ENCODE measurements at regions of chr7 and their contacts with region 1.

Region 1: DNA sequence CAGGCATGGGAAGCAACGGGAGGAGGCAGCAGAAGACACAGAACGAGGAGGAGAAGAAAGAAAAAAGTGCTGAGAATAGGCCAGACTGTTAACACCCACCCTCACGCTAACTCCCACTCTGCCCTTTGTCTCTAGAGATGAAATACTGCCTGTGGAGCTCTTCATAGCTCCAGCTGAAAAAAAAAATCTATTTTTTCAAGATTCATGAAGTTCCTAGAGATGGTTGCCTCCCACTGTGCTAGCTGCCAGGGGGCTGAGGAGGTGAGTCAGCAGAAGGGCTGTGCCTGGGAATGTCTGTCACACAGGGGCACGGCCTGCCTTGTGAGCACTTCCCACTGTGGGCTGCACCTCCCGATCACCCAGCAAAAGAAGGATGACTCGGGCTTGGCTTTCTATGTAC is 144.5 kb downstream of the RNF216 start:
- DNase-seq: no peak
- H3K4me3 Mint-ChIP-seq: no peak overlapping the region
- H3K27ac Mint-ChIP-seq: no peak overlapping the region
- H3K4me1 Mint-ChIP-seq: peaks cover 15% of the 10 kb centered on the region
- H3K27me3 Mint-ChIP-seq: no peaks in the 10 kb centered on the region

Region 2: GRCh38 chr7:5596046-5596895 is 40.6 kb before region 1 on chr7:
- CTCF ChIA-PET with region 1: no interaction called
- POLR2A ChIA-PET with region 1: no interaction called
- intact Hi-C with region 1: loop called (anchors 5 kb)
- DNase-seq: peak; percentile 90
- H3K4me3 Mint-ChIP-seq: peak overlapping the region; percentile 58
- H3K27ac Mint-ChIP-seq: peak overlapping the region; percentile 40
- H3K4me1 Mint-ChIP-seq: peaks cover 23% of the 10 kb centered on the region
- H3K27me3 Mint-ChIP-seq: peaks cover 23% of the 10 kb centered on the region